Activated CD4-positive, alpha-beta memory T cell treated with anti-CD3 and anti-CD28 coated beads, Interleukin-2, amount 10 ng/mL, durations not matched to agents 7 days and 5 days (primary cell): ENCODE measurements at regions of chr14 and their contacts with region 1.

Region 1: DNA sequence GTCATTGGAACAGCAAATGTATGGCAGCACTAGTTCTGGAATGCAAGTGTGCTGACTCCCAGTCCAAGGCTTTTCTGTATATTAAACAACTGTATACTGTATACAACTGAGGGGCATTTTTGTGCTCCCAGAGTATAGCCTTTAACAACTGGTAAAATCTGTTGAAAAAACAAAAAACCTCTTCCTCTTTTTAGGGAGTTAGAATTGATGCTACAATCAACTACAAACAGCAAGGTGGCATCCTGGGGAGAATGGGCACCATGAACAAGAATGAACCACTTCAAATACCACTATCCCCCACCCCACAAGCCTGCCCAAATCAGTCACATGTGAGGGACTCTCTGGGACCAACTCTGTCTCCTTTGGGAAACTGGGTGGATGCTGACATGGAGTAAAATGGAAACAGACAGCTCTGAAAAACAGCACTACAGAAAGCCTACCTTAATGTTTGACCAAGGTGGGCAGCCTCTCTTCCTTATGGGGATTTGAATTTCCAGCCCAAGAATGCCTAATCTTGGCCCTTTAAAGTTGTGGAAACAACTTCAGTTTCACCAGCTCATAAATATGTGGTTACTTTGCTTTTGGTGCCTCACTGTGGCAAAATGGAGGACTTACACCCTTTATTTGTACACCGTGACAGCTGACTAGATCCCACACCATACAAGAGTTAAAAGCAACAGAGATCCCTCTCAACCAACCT is 7.5 kb downstream of the VTI1B start:
- DNase-seq: no peak
- H3K4me3 Mint-ChIP-seq: no peak overlapping the region
- H3K27ac Mint-ChIP-seq: peak overlapping the region; percentile 16
- H3K4me1 Mint-ChIP-seq: peaks cover 36% of the 10 kb centered on the region
- H3K27me3 Mint-ChIP-seq: no peaks in the 10 kb centered on the region

Region 2: GRCh38 chr14:67426983-67427606 is 239.8 kb before region 1 on chr14:
- CTCF ChIA-PET with region 1: interaction called, 21 read pairs
- POLR2A ChIA-PET with region 1: no interaction called
- DNase-seq: peak; percentile 76
- H3K4me3 Mint-ChIP-seq: no peak overlapping the region
- H3K27ac Mint-ChIP-seq: no peak overlapping the region
- H3K4me1 Mint-ChIP-seq: peaks cover 5% of the 10 kb centered on the region
- H3K27me3 Mint-ChIP-seq: peaks cover 37% of the 10 kb centered on the region

Region 3: DNA sequence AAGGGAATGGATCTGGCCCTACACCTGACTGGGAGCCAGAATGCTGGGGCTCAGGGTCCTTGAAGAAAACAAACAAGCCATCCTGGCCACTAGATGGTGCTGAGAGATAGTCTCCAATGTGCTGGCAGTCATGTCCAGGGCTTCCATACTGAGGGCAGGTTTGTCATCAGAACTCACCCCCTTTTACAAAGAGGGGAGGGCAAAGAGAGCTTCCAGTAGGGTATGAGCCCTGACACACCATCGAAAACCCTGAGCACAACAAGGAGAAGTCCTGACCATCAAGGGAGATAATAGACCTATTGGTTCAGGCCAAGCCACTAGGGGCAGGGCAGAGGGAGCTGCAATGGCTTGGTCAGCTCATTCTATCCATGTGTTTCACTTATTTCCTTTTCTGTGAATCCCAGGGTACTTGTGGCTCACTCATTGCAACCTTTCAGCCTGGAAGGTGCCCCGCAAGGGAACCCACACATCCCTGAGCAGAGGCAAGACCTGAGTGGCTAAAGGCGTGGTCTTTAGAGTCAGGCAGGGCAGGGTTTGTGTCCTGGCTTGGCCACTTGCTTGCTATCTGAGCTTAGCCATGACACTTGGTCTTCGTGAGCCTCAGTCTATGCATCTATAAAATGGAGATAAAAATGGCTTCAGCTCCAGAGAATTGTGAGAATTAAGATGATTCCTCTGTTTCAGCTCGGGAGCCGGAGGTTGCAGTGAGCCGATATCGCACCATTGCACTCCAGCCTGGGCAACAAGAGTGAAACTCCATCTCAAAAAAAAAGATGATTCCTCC is 140.0 kb before region 1 on chr14:
- CTCF ChIA-PET with region 1: interaction called, 10 read pairs
- POLR2A ChIA-PET with region 1: no interaction called
- DNase-seq: peak; percentile 42
- H3K4me3 Mint-ChIP-seq: no peak overlapping the region
- H3K27ac Mint-ChIP-seq: no peak overlapping the region
- H3K4me1 Mint-ChIP-seq: no peaks in the 10 kb centered on the region
- H3K27me3 Mint-ChIP-seq: peaks cover 62% of the 10 kb centered on the region

Region 4: GRCh38 chr14:67541448-67542387 is 125.2 kb before region 1 on chr14:
- CTCF ChIA-PET with region 1: no interaction called
- POLR2A ChIA-PET with region 1: no interaction called
- DNase-seq: no peak
- H3K4me3 Mint-ChIP-seq: no peak overlapping the region
- H3K27ac Mint-ChIP-seq: no peak overlapping the region
- H3K4me1 Mint-ChIP-seq: peaks cover 10% of the 10 kb centered on the region
- H3K27me3 Mint-ChIP-seq: peaks cover 49% of the 10 kb centered on the region

Region 5: GRCh38 chr14:67583711-67584644 is 82.9 kb before region 1 on chr14:
- CTCF ChIA-PET with region 1: interaction called, 19 read pairs
- POLR2A ChIA-PET with region 1: no interaction called
- DNase-seq: peak; percentile 26
- H3K4me3 Mint-ChIP-seq: no peak overlapping the region
- H3K27ac Mint-ChIP-seq: no peak overlapping the region
- H3K4me1 Mint-ChIP-seq: peaks cover 12% of the 10 kb centered on the region
- H3K27me3 Mint-ChIP-seq: no peaks in the 10 kb centered on the region

Region 6: DNA sequence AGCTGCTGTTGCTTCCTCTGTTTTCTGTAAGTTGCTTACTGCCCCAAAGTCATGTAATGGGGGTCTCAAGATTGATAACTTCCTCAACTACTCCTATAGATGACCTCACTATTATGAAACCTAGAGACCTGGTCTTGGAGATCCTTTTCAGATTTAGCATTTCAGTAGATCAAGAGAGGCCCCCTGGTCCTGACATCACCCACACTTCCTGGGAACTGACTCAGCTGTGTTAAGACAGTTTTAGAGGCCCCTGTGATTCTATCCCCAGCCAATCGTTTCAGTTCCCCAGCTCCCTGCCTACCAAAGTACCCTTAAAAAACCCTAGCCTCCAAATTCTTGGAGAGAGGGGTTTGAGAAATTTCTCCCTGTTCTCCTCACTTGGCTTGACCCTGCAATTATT is 56.4 kb before region 1 on chr14:
- CTCF ChIA-PET with region 1: interaction called, 10 read pairs
- POLR2A ChIA-PET with region 1: no interaction called
- DNase-seq: no peak
- H3K4me3 Mint-ChIP-seq: no peak overlapping the region
- H3K27ac Mint-ChIP-seq: no peak overlapping the region
- H3K4me1 Mint-ChIP-seq: peaks cover 3% of the 10 kb centered on the region
- H3K27me3 Mint-ChIP-seq: peaks cover 10% of the 10 kb centered on the region

Region 7: DNA sequence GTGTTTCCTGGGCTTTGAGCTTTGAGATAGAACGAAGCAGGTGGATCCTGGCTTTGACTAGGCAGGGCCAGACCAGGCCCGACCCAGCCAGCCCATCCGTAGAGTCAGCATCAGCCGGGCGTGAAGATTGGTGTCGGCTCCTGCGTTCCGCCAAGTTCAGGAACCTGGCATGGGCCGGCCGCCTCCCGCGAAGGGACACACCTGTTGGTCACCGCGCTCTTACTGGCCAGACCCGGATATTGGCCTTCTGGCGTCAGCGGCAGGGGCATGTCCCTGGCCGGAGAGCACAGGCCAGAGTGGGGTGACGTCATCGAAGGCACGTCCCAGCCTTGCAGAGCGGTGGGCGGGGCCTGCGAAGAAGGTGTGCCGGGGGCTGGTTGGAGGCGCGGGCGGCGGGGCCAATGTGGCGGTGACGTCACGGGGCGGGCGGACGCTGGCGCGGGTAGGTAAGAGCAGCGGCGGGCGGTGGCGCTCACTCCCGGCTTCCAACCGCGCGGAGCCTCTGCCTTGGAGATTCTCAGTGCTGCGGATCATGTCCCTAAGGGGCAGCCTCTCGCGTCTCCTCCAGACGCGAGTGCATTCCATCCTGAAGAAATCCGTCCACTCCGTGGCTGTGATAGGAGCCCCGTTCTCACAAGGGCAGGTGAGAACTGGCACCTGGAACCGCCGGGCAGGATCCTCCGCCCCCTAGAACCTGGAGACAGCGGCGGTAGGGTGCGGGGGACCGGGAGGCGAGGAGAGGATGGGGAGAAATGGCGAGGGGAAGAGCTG is 47.3 kb before region 1 on chr14 and contains the start of gene ARG2:
- CTCF ChIA-PET with region 1: interaction called, 43 read pairs
- POLR2A ChIA-PET with region 1: interaction called, 4 read pairs
- DNase-seq: peak; percentile 96
- H3K4me3 Mint-ChIP-seq: peak within 1 kb of the TSS; percentile 78
- H3K27ac Mint-ChIP-seq: peak within 1 kb of the TSS; percentile 59
- H3K4me1 Mint-ChIP-seq: peaks cover 32% of the 10 kb centered on the region
- H3K27me3 Mint-ChIP-seq: peaks cover 17% of the 10 kb centered on the region
- total RNA-seq, gene ARG2: 6.8 to 7.7 TPM

Region 8: DNA sequence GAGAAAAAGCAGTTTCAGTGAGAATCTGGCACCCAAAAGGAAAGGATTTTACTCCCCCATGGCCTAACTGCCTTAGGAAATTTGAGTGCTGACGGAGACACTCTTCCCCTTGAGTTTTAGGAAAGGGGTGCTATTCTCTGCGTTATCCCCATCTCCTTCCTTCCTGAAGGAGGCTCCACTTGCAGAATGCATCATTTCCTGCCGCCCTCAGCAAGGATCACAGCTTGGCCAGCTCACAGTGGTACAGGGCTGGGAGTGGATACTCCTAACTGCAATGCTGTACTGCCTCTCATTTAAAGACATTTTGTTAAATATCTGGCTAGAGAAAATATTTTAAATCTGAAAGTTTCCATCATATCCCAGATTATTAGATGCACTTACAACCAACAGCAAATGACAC is 67.8 kb after region 1 on chr14:
- CTCF ChIA-PET with region 1: no interaction called
- POLR2A ChIA-PET with region 1: no interaction called
- DNase-seq: no peak
- H3K4me3 Mint-ChIP-seq: no peak overlapping the region
- H3K27ac Mint-ChIP-seq: no peak overlapping the region
- H3K4me1 Mint-ChIP-seq: peaks cover 1% of the 10 kb centered on the region
- H3K27me3 Mint-ChIP-seq: no peaks in the 10 kb centered on the region